WTC11 (cell line): ENCODE measurements at regions of chr1 and their contacts with region 1.

Region 1: GRCh38 chr1:109201123-109201703 is 12.5 kb upstream of the SARS1 start:
- DNase-seq: peak; percentile 77
- ATAC-seq: peak; percentile 92
- H3K4me3 Mint-ChIP-seq: no peak overlapping the region
- H3K27ac Mint-ChIP-seq: 0 out of 2 replicates have a peak overlapping the region, but pooled peaks have one; percentile 59
- H3K4me1 Mint-ChIP-seq: peaks cover 3% of the 10 kb centered on the region; the same call in 1 of the 2 replicates
- H3K27me3 Mint-ChIP-seq: no peaks in the 10 kb centered on the region; the same call in 1 of the 2 replicates
- CTCF ChIP-seq: peak; percentile 42

Region 2: GRCh38 chr1:109213785-109214468 is 12.7 kb after region 1 on chr1 and contains the start of gene SARS1:
- CTCF ChIA-PET with region 1: interaction called, 25 read pairs
- POLR2A ChIA-PET with region 1: no interaction called
- DNase-seq: peak; percentile 89
- ATAC-seq: peak; percentile 94
- H3K4me3 Mint-ChIP-seq: peak within 1 kb of the TSS; percentile 99
- H3K27ac Mint-ChIP-seq: peak within 1 kb of the TSS; percentile 92
- H3K4me1 Mint-ChIP-seq: peaks cover 21% of the 10 kb centered on the region
- H3K27me3 Mint-ChIP-seq: peaks cover 2% of the 10 kb centered on the region; the same call in 1 of the 2 replicates
- CTCF ChIP-seq: no peak
- total RNA-seq, gene SARS1: 126 to 149 TPM (median 129 TPM) in 3 replicates

Region 3: GRCh38 chr1:109248797-109249642 is 47.8 kb after region 1 on chr1 and contains the start of gene CELSR2:
- CTCF ChIA-PET with region 1: interaction called, 46 read pairs
- POLR2A ChIA-PET with region 1: interaction called, 4 read pairs
- DNase-seq: peak; percentile 88
- ATAC-seq: peak; percentile 84
- H3K4me3 Mint-ChIP-seq: peak within 1 kb of the TSS; percentile 63
- H3K27ac Mint-ChIP-seq: no peak within 1 kb of the TSS
- H3K4me1 Mint-ChIP-seq: peaks cover 24% of the 10 kb centered on the region
- H3K27me3 Mint-ChIP-seq: peaks cover 36% of the 10 kb centered on the region
- CTCF ChIP-seq: no peak
- total RNA-seq, gene CELSR2: 26.8 to 31.3 TPM (median 28.2 TPM) in 3 replicates

Region 4: GRCh38 chr1:109263597-109264398 is 62.6 kb after region 1 on chr1:
- CTCF ChIA-PET with region 1: interaction called, 18 read pairs
- POLR2A ChIA-PET with region 1: interaction called, 3 read pairs
- DNase-seq: peak; percentile 96
- ATAC-seq: peak; percentile 93
- H3K4me3 Mint-ChIP-seq: no peak overlapping the region
- H3K27ac Mint-ChIP-seq: no peak overlapping the region
- H3K4me1 Mint-ChIP-seq: peaks cover 21% of the 10 kb centered on the region
- H3K27me3 Mint-ChIP-seq: no peaks in the 10 kb centered on the region
- CTCF ChIP-seq: peak; percentile 97

Region 5: DNA sequence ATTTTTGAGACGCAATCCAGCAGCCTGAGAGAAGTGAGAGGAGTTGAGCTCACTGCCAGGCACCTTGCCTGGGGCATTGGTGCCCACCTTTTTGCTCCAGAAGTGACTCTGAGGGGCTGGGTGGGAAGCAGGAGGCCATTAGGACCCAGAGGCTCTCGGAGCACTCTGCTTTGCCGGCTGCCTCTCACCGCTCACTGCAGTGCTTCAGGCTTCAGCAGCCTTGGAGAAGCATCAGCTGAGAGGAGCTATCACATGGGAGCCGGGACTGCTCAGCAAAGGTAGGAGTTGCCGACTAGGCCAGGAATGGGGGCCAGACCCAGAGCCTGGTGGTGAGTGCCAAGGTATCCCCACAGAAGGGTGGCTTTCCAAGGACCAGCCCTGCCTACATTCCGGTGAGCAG is 338.5 kb after region 1 on chr1 and contains the start of gene GPR61:
- CTCF ChIA-PET with region 1: no interaction called
- POLR2A ChIA-PET with region 1: no interaction called
- DNase-seq: no peak
- ATAC-seq: peak; percentile 83
- H3K4me3 Mint-ChIP-seq: no peak within 1 kb of the TSS
- H3K27ac Mint-ChIP-seq: no peak within 1 kb of the TSS
- H3K4me1 Mint-ChIP-seq: peaks cover 8% of the 10 kb centered on the region
- H3K27me3 Mint-ChIP-seq: no peaks in the 10 kb centered on the region; the same call in none of the 2 replicates
- CTCF ChIP-seq: no peak
- total RNA-seq, gene GPR61: 0.42 to 0.73 TPM (median 0.44 TPM) in 3 replicates